OCI-LY7 (cell line): ENCODE measurements at regions of chr11 and their contacts with region 1.

Region 1: GRCh38 chr11:18364495-18365073 is 29.8 kb upstream of the LDHA start:
- DNase-seq: no peak
- H3K4me3 ChIP-seq: no peak overlapping the region
- H3K27ac ChIP-seq: no peak overlapping the region
- H3K4me1 ChIP-seq: no peaks in the 10 kb centered on the region
- CTCF ChIP-seq: no peak

Region 2: GRCh38 chr11:18374956-18375355 is 10.4 kb after region 1 on chr11:
- CTCF ChIA-PET with region 1: no interaction called
- POLR2A ChIA-PET with region 1: interaction called, 12 read pairs
- intact Hi-C with region 1: no loop called
- DNase-seq: no peak
- H3K4me3 ChIP-seq: no peak overlapping the region
- H3K27ac ChIP-seq: no peak overlapping the region
- H3K4me1 ChIP-seq: peaks cover 5% of the 10 kb centered on the region
- CTCF ChIP-seq: no peak